ENCODE measurements at regions of chr10 and their contacts with region 1.

Region 1: DNA sequence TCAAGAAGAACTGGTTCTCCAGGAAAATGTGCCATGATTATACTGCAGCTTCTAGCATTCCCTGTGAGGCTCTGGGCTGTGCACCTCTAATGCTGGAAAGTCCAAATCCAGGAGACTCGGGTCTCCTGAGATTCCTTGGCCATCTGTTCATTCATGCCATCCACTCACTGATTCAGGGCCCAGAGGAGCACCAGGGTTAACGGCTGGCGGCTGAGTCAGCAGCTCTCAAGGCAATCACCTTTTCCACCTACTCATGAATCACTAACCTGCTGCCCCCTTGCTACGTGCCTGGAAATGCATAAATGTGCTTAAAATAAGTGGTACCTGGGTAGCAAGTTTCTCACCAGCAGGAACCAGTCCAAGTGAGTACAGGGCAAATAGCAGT is 132.7 kb downstream of the KCNMA1 start:
- H3K4me3 ChIP-seq: no peak overlapping the region
- H3K27ac ChIP-seq: no peak overlapping the region
- H3K4me1 ChIP-seq: no peaks in the 10 kb centered on the region; the same call in 1 of the 2 replicates
- CTCF ChIP-seq: no peak

Region 2: DNA sequence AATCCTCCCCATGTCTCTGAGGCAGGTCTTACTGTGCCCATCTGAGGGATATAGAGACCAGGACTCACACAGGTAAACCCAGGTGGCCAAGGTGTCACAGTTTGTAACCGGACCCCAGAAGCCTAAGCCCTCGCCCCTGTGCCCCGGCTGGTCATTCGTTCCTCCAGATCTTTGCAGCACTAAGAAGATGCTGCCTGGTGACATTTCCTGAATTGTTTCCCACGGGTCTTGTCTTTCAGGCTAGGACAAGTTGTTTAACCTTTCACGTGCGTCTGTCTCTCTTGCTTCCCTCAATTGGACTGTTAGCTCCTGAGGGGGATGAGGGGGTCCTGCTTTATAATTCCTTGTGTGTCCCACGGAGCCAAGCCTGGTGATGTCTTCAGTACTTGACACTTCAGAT is 25.3 kb before region 1 on chr10:
- CTCF ChIA-PET with region 1: interaction called, 10 read pairs
- POLR2A ChIA-PET with region 1: no interaction called
- H3K4me3 ChIP-seq: no peak overlapping the region
- H3K27ac ChIP-seq: no peak overlapping the region
- H3K4me1 ChIP-seq: peaks cover 11% of the 10 kb centered on the region
- CTCF ChIP-seq: no peak